Naive thymus-derived CD4-positive, alpha-beta T cell (primary cell): ENCODE measurements at regions of chr19 and their contacts with region 1.

Region 1: GRCh38 chr19:39341719-39342604 is at the start of gene SAMD4B:
- DNase-seq: peak; percentile 97 to 100 (median 99)
- ATAC-seq: peak; percentile 93
- H3K4me3 ChIP-seq: peak within 1 kb of the TSS; percentile 95
- H3K4me3 Mint-ChIP-seq: peak within 1 kb of the TSS; percentile 90 to 100 (median 97)
- H3K27ac ChIP-seq: peak within 1 kb of the TSS; percentile 84
- H3K27ac Mint-ChIP-seq: peak within 1 kb of the TSS; percentile 90 to 97 (median 96)
- H3K4me1 ChIP-seq: peaks cover 23 to 42% of the 10 kb centered on the region in 2 donors
- H3K4me1 Mint-ChIP-seq: peaks cover 64 to 77% (median 73%) of the 10 kb centered on the region in 7 donors
- H3K27me3 ChIP-seq: no peaks in the 10 kb centered on the region
- H3K27me3 Mint-ChIP-seq: no peaks in the 10 kb centered on the region
- total RNA-seq, gene SAMD4B: 52.0 to 84.6 (median 65.6) TPM

Region 2: GRCh38 chr19:38899447-38900219 is 442.3 kb before region 1 on chr19 and contains the starts of genes NFKBIB and SIRT2:
- CTCF ChIA-PET with region 1: no interaction called
- POLR2A ChIA-PET with region 1: no interaction called
- intact Hi-C with region 1: loop called in 1 of 2 experiments (anchors 1 kb)
- DNase-seq: peak; percentile 86 to 100 (median 99)
- ATAC-seq: peak; percentile 93
- H3K4me3 ChIP-seq: peak within 1 kb of the TSS; percentile 74
- H3K4me3 Mint-ChIP-seq: peak within 1 kb of the TSS; percentile 88 to 100 (median 96)
- H3K27ac ChIP-seq: peak within 1 kb of the TSS; percentile 97
- H3K27ac Mint-ChIP-seq: peak within 1 kb of the TSS; percentile 86 to 99 (median 94)
- H3K4me1 ChIP-seq: peaks cover 15 to 29% of the 10 kb centered on the region in 2 donors
- H3K4me1 Mint-ChIP-seq: peaks cover 27 to 74% (median 50%) of the 10 kb centered on the region in 7 donors
- H3K27me3 ChIP-seq: no peaks in the 10 kb centered on the region
- H3K27me3 Mint-ChIP-seq: no peaks in the 10 kb centered on the region
- total RNA-seq, gene NFKBIB: 21.7 to 51.8 (median 34.1) TPM
- total RNA-seq, gene SIRT2: 42.9 to 78.5 (median 54.0) TPM

Region 3: GRCh38 chr19:39319892-39320248 is 22.1 kb before region 1 on chr19:
- CTCF ChIA-PET with region 1: no interaction called
- POLR2A ChIA-PET with region 1: interaction called, 3 read pairs
- intact Hi-C with region 1: loop called in 1 of 2 experiments (anchors 2 kb)
- DNase-seq: no peak
- ATAC-seq: no peak
- H3K4me3 ChIP-seq: peak overlapping the region; percentile 62
- H3K4me3 Mint-ChIP-seq: peak overlapping the region; percentile 67 to 89 (median 80)
- H3K27ac ChIP-seq: peak overlapping the region; percentile 70
- H3K27ac Mint-ChIP-seq: peak overlapping the region in 8 of 9 donors; percentile 48 to 91 (median 66)
- H3K4me1 ChIP-seq: peaks cover 9 to 10% of the 10 kb centered on the region in 2 donors
- H3K4me1 Mint-ChIP-seq: peaks cover 20 to 48% (median 30%) of the 10 kb centered on the region in 7 donors
- H3K27me3 ChIP-seq: no peaks in the 10 kb centered on the region
- H3K27me3 Mint-ChIP-seq: peaks cover 0 to 8% (median 0%) of the 10 kb centered on the region in 5 donors

Region 4: DNA sequence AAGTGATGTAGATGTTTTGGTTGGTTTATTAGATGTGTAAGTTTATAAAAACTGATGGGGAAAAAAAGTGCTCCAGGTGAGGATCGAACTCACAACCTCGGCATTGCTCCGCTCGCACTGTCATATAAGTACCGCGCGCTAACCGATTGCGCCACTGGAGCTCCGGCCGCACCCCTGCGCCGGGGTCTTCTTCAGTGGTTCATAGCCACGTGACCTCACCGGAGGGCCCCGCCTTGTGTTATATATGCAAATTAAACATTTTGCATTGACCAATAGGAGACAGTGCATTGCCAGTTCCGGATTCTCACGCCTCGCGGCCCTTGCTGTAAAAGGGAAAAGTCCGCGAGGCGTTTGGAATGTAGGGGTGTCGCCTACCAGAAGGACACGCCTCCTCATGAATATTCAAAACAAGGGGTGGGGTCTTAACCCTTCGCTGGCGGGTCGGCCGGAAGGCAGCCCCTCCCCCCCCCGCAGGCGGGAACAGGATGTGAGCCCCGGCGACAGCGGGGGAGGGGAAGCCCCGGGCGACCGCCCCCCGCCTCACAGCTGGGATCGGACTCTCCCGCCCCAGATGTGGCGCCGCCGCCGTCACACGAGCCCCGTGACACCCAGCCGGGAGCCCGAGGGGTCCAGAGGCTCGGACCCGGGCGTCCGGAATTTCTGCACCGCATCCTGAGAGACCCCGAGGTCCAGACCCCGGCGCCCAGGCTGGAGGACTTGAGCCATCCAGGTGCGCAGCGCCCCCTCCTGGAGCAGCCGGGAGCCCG is 70.3 kb after region 1 on chr19 and contains the start of gene PLEKHG2:
- CTCF ChIA-PET with region 1: interaction called, 3 read pairs
- POLR2A ChIA-PET with region 1: interaction called, 14 read pairs
- intact Hi-C with region 1: loop called (anchors 1 kb)
- DNase-seq: peak; percentile 95 to 99 (median 99)
- ATAC-seq: peak; percentile 72
- H3K4me3 ChIP-seq: peak within 1 kb of the TSS; percentile 82
- H3K4me3 Mint-ChIP-seq: peak within 1 kb of the TSS; percentile 84 to 99 (median 92)
- H3K27ac ChIP-seq: peak within 1 kb of the TSS; percentile 100
- H3K27ac Mint-ChIP-seq: peak within 1 kb of the TSS; percentile 90 to 100 (median 97)
- H3K4me1 ChIP-seq: peaks cover 24 to 28% of the 10 kb centered on the region in 2 donors
- H3K4me1 Mint-ChIP-seq: peaks cover 24 to 49% (median 35%) of the 10 kb centered on the region in 7 donors
- H3K27me3 ChIP-seq: no peaks in the 10 kb centered on the region
- H3K27me3 Mint-ChIP-seq: peaks cover 0 to 3% (median 0%) of the 10 kb centered on the region in 5 donors
- total RNA-seq, gene PLEKHG2: 16.4 to 205 (median 58.2) TPM

Region 5: DNA sequence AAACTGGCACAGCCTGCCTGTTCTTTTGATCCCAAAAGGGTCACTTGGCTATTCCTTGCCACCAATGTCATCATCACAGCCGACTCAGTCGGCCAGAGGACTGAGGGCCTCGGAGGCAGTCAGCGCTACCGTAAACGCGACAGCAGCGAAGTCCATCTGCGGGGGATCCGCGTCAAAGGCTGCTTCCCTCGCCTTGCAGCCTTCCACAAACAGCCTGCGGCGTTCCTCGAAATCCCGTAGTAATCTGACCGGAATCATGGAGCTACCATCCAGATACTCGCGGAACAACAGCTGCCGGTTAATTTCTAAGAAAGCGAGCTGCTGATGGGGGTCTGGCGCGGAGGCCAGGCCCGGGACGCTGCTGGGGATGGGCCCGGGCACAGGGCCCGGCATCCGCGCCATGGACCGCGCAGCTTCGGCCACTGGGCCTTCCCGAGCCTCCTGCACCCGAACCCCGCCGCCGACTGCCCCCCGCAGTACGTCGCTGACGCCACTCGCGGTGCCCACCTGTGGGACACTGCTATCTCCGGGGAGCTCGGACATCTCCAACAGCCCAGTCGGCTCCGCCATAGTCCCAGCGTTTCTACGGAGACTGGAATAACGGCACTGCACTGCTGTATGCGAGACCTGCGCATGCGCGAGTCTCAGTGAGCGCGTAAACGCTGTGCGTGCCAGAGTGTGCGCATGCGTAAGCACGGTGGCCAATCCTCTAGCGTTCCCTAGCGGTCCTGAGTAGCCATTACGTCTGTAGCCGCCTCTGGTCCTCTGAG is 190.5 kb after region 1 on chr19 and contains the start of gene EID2B:
- CTCF ChIA-PET with region 1: no interaction called
- POLR2A ChIA-PET with region 1: no interaction called
- intact Hi-C with region 1: loop called (anchors 2 kb)
- DNase-seq: peak; percentile 91 to 95 (median 93)
- ATAC-seq: peak; percentile 99
- H3K4me3 ChIP-seq: peak within 1 kb of the TSS; percentile 92
- H3K4me3 Mint-ChIP-seq: peak within 1 kb of the TSS; percentile 87 to 96 (median 92)
- H3K27ac ChIP-seq: peak within 1 kb of the TSS; percentile 82
- H3K27ac Mint-ChIP-seq: peak within 1 kb of the TSS; percentile 74 to 95 (median 92)
- H3K4me1 ChIP-seq: peaks cover 9 to 15% of the 10 kb centered on the region in 2 donors
- H3K4me1 Mint-ChIP-seq: peaks cover 20 to 55% (median 32%) of the 10 kb centered on the region in 7 donors
- H3K27me3 ChIP-seq: no peaks in the 10 kb centered on the region
- H3K27me3 Mint-ChIP-seq: no peaks in the 10 kb centered on the region
- total RNA-seq, gene EID2B: 4.4 to 8.5 (median 6.2) TPM

Region 6: DNA sequence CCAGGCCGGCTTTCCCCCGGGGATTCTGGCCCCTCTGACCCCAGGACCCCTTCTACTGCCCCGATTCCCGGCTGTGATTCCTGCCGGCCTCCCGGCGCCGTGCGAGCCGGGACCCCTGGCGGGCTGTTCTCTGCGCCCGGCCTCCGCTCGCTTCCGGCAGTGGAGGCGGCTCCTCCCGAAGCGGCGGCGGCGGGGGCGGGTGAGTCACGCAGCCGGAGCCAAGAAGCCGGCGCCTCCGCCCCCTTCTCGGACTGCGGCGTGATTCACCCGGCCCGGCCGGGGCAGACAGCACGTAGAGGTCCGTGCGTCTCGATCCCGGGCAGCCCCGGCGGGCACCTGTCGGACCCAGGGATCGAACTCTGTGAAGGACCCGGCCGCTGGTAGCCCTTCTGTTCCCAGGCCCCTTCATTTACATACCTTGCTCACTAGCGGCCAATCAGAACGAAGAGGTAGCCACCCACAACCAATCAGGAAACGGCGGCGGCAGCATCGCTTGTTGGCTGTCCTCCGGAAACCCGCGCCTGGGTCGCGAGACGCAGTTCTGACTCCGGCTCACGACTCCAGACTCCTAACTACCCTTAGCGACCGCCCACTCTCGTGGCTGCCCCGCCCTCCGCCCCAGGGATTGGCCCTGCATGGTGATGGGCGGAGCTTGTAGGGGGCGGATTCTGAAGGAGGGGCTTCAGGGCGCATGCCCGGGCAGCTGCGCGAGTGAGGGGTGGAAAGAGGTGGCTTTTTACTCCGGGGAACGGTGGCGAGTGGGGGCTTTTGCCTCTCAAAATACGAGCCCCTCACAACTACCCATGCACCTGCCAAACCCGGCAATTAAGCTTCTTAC is 1083.7 kb after region 1 on chr19 and contains the start of gene SERTAD1:
- CTCF ChIA-PET with region 1: no interaction called
- POLR2A ChIA-PET with region 1: no interaction called
- intact Hi-C with region 1: loop called in 1 of 2 experiments (anchors 10 kb)
- DNase-seq: peak; percentile 99 to 100 (median 100)
- ATAC-seq: peak; percentile 96
- H3K4me3 ChIP-seq: peak within 1 kb of the TSS; percentile 77
- H3K4me3 Mint-ChIP-seq: peak within 1 kb of the TSS; percentile 90 to 99 (median 96)
- H3K27ac ChIP-seq: peak within 1 kb of the TSS; percentile 87
- H3K27ac Mint-ChIP-seq: peak within 1 kb of the TSS; percentile 92 to 100 (median 98)
- H3K4me1 ChIP-seq: peaks cover 15 to 18% of the 10 kb centered on the region in 2 donors
- H3K4me1 Mint-ChIP-seq: peaks cover 12 to 38% (median 24%) of the 10 kb centered on the region in 7 donors
- H3K27me3 ChIP-seq: no peaks in the 10 kb centered on the region
- H3K27me3 Mint-ChIP-seq: peaks cover 0 to 2% (median 0%) of the 10 kb centered on the region in 5 donors
- total RNA-seq, gene SERTAD1: 8.1 to 30.9 (median 13.5) TPM